ENCODE measurements at regions of chr15 and their contacts with region 1.

Region 1: GRCh38 chr15:52445553-52445952 is 83.1 kb downstream of the MYO5A start:
- DNase-seq: no peak
- H3K4me3 ChIP-seq: no peak overlapping the region
- H3K4me3 Mint-ChIP-seq: no peak overlapping the region
- H3K27ac Mint-ChIP-seq: no peak overlapping the region
- H3K4me1 ChIP-seq: no peaks in the 10 kb centered on the region
- H3K4me1 Mint-ChIP-seq: no peaks in the 10 kb centered on the region
- H3K27me3 ChIP-seq: no peaks in the 10 kb centered on the region
- H3K27me3 Mint-ChIP-seq: no peaks in the 10 kb centered on the region
- CTCF ChIP-seq: no peak

Region 2: DNA sequence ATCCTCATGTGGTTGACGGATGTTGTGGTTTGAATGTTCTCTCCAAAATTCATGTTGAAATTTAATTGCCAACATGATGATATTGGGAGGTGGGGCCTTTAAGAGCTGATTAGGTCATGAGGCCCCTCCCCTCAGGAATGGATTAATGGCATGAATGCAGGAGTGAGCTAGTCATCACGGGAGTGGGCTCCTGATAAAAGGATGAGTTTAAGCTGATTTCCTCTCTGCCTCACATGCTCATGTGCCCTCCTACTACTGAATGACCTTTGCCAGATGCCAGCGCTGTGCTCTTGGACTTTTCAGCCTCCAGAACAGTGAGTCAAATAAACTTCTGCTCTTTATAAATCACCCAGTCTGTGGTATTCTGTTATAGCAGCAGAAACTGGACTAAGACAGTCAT is 28.0 kb before region 1 on chr15:
- CTCF ChIA-PET with region 1: no interaction called
- POLR2A ChIA-PET with region 1: interaction called, 18 read pairs
- intact Hi-C with region 1: no loop called
- DNase-seq: no peak
- H3K4me3 ChIP-seq: no peak overlapping the region
- H3K4me3 Mint-ChIP-seq: no peak overlapping the region
- H3K27ac Mint-ChIP-seq: no peak overlapping the region
- H3K4me1 ChIP-seq: no peaks in the 10 kb centered on the region
- H3K4me1 Mint-ChIP-seq: no peaks in the 10 kb centered on the region
- H3K27me3 ChIP-seq: no peaks in the 10 kb centered on the region
- H3K27me3 Mint-ChIP-seq: no peaks in the 10 kb centered on the region
- CTCF ChIP-seq: no peak

Region 3: GRCh38 chr15:52579852-52580251 is 134.3 kb after region 1 on chr15:
- CTCF ChIA-PET with region 1: no interaction called
- POLR2A ChIA-PET with region 1: no interaction called
- intact Hi-C with region 1: no loop called
- DNase-seq: no peak
- H3K4me3 ChIP-seq: no peak overlapping the region
- H3K4me3 Mint-ChIP-seq: no peak overlapping the region
- H3K27ac Mint-ChIP-seq: no peak overlapping the region
- H3K4me1 ChIP-seq: no peaks in the 10 kb centered on the region
- H3K4me1 Mint-ChIP-seq: no peaks in the 10 kb centered on the region
- H3K27me3 ChIP-seq: no peaks in the 10 kb centered on the region
- H3K27me3 Mint-ChIP-seq: no peaks in the 10 kb centered on the region
- CTCF ChIP-seq: no peak